Heart left ventricle (tissue), 16 donors: ENCODE measurements at regions of chr14 and their contacts with region 1.

Region 1: GRCh38 chr14:54773171-54773975 is 129.3 kb downstream of the GCH1 start:
- DNase-seq: peak; percentile 84 to 94 (median 88)
- ATAC-seq: peak; percentile 78 to 89 (median 87)
- H3K4me3 ChIP-seq: peak overlapping the region in 4 of 12 donors; percentile 3 to 25 (median 9)
- H3K27ac ChIP-seq: peak overlapping the region; percentile 31 to 96 (median 91)
- H3K4me1 ChIP-seq: peaks cover 0 to 93% (median 62%) of the 10 kb centered on the region in 12 donors
- H3K27me3 ChIP-seq: no peaks in the 10 kb centered on the region
- CTCF ChIP-seq: peak; percentile 47 to 76 (median 64)
- POLR2A ChIP-seq: peak in 1 of 2 donors; percentile 28

Region 2: DNA sequence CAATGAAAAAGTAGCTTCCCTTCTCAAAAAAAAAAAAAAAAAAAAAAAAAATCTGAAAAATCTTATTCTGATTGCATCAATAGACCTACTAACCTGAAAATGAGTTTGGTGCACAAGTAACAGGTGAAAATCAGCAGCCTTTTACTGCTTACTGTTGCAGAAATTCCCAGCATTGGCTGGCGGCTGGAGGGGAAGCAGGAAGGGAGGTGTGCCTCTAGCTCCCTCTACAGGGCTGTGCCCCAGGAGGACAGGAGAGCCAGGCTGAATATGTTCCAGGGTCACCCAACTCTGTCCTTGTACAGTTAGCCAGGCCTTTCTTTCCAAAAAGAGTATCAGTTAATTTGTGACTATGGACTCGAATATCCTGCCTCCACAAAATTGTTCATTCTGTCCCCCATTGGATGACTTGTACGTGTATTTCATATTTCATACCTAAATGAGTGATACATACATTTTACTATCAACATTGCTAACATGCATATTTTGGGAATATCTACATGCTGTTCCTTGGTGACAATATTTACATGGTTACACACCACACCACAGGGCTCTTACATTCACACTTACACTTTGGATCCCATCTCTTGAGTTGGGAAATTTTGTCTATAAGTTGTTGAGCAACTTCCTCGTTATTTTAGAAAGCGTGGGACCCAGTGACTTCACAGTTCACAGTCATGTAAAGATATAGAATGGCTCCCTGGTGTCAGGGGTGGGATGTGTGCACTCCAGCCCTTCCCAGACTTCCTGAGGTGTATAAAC is 81.7 kb before region 1 on chr14:
- intact Hi-C with region 1: loop called in 9 of 10 experiments (anchors 2 to 5 kb)
- DNase-seq: peak; percentile 80 to 86 (median 84)
- ATAC-seq: peak; percentile 67 to 82 (median 74)
- H3K4me3 ChIP-seq: no peak overlapping the region
- H3K27ac ChIP-seq: peak overlapping the region; percentile 44 to 94 (median 70)
- H3K4me1 ChIP-seq: peaks cover 3 to 81% (median 48%) of the 10 kb centered on the region in 12 donors
- H3K27me3 ChIP-seq: no peaks in the 10 kb centered on the region
- CTCF ChIP-seq: peak; percentile 84 to 92 (median 88)
- POLR2A ChIP-seq: no peak

Region 3: GRCh38 chr14:54698966-54699530 is 74.3 kb before region 1 on chr14:
- intact Hi-C with region 1: loop called in 6 of 10 experiments (anchors 5 kb)
- DNase-seq: peak in 4 of 5 donors; percentile 61 to 77 (median 69)
- ATAC-seq: peak; percentile 89 to 95 (median 92)
- H3K4me3 ChIP-seq: no peak overlapping the region
- H3K27ac ChIP-seq: peak overlapping the region; percentile 30 to 92 (median 84)
- H3K4me1 ChIP-seq: peaks cover 0 to 86% (median 40%) of the 10 kb centered on the region in 12 donors
- H3K27me3 ChIP-seq: no peaks in the 10 kb centered on the region
- CTCF ChIP-seq: no peak
- POLR2A ChIP-seq: peak in 1 of 2 donors; percentile 47

Region 4: DNA sequence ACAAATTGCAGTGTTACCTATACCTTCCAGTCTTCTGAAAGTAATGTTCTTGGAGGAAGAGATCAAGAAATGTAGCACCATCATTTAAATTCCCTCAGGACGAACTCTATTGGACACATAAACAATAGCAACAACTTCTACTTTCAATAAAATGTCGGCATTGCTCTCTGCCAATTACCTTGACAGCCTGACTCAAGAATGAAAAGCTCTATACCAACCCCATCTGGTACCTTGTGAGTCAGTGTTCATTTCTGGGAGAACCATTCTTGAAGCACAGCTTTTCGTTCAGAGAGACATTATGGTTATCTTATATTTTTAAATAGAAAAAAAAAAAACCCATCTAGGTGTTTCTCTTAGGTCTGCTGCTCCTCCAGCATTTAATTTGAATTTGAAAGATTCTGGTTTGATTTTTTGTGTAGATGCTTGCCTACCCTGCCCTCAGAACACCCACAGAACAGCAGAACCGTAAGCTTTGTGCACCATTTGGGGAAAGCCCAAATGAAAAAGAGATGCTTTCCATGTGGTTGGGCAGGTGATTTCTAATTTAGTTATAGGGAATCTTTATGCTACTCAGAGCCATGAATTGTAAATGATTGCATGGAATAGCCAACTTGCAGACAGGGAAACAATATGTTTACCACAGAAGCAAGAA is 50.5 kb before region 1 on chr14:
- intact Hi-C with region 1: loop called in 2 of 10 experiments (anchors 5 kb)
- DNase-seq: no peak
- ATAC-seq: peak; percentile 24 to 70 (median 54)
- H3K4me3 ChIP-seq: no peak overlapping the region
- H3K27ac ChIP-seq: peak overlapping the region in 5 of 12 donors; percentile 7 to 54 (median 35)
- H3K4me1 ChIP-seq: peaks cover 0 to 41% (median 18%) of the 10 kb centered on the region in 12 donors
- H3K27me3 ChIP-seq: no peaks in the 10 kb centered on the region
- CTCF ChIP-seq: peak; percentile 27 to 69 (median 45)
- POLR2A ChIP-seq: no peak

Region 5: GRCh38 chr14:54730156-54730961 is 43.0 kb before region 1 on chr14:
- intact Hi-C with region 1: loop called in 4 of 10 experiments (anchors 5 kb)
- DNase-seq: no peak
- ATAC-seq: peak; percentile 40 to 75 (median 66)
- H3K4me3 ChIP-seq: peak overlapping the region in 7 of 12 donors; percentile 4 to 40 (median 23)
- H3K27ac ChIP-seq: peak overlapping the region; percentile 20 to 74 (median 59)
- H3K4me1 ChIP-seq: peaks cover 0 to 59% (median 23%) of the 10 kb centered on the region in 12 donors
- H3K27me3 ChIP-seq: no peaks in the 10 kb centered on the region
- CTCF ChIP-seq: no peak
- POLR2A ChIP-seq: no peak

Region 6: DNA sequence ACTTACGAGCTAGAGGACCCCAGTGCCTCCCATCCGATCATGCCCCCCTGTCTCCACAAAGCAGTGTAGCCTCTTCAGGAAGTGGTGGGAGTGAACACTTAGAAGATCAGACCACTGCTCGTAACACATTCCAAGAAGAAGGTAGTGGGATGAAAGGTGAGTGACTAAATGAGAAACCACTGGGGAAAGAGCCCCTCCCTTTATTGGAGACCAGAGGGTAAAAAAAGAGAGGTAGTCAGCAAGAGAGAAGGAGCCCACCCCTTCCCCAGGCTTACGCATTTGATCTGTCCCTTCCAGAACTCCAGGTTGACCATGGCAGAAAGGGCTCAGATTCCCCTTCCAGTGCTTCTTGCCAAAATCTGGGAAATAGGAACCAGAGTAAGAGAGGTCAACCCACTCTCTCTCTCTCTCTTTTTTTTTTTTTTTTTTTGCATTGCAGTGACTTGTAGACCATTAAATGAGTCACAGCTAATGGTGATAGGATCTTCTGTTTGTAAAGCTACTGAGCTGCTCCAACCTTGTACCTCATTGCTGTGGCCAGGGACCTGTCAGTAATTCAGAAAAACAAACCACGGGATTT is 36.2 kb before region 1 on chr14:
- intact Hi-C with region 1: loop called in 3 of 10 experiments (anchors 5 kb)
- DNase-seq: no peak
- ATAC-seq: no peak
- H3K4me3 ChIP-seq: no peak overlapping the region
- H3K27ac ChIP-seq: peak overlapping the region in 5 of 12 donors; percentile 2 to 55 (median 34)
- H3K4me1 ChIP-seq: peaks cover 0 to 55% (median 15%) of the 10 kb centered on the region in 12 donors
- H3K27me3 ChIP-seq: no peaks in the 10 kb centered on the region
- CTCF ChIP-seq: no peak
- POLR2A ChIP-seq: no peak

Region 7: GRCh38 chr14:54805521-54806322 is 32.3 kb after region 1 on chr14:
- intact Hi-C with region 1: loop called in 1 of 10 experiments (anchors 1 kb)
- DNase-seq: peak; percentile 81 to 91 (median 82)
- ATAC-seq: peak; percentile 82 to 94 (median 90)
- H3K4me3 ChIP-seq: peak overlapping the region in 8 of 12 donors; percentile 1 to 34 (median 16)
- H3K27ac ChIP-seq: no peak overlapping the region
- H3K4me1 ChIP-seq: peaks cover 0 to 11% (median 4%) of the 10 kb centered on the region in 12 donors
- H3K27me3 ChIP-seq: no peaks in the 10 kb centered on the region
- CTCF ChIP-seq: peak; percentile 91 to 98 (median 96)
- POLR2A ChIP-seq: no peak

Region 8: DNA sequence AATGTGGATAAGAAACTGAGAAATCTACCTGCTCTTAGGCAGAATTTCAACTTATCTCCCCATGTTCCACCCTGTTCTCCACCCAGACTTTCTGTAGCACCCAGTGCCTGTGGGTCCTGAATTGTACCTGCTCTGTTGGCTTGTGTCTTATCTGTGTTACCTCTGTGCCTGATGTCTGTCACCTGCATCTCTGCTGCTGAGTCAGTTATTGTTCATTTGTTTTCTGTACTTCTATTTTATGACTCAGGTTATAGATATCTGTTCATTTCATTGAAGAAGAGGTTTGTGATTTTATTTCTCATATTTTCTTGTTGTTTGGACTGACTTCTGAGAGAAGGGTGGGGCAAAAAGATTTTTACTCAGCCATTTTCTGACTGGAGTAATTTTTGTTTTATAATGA is 265.3 kb after region 1 on chr14:
- intact Hi-C with region 1: no loop called
- DNase-seq: no peak
- ATAC-seq: no peak
- H3K4me3 ChIP-seq: no peak overlapping the region
- H3K27ac ChIP-seq: no peak overlapping the region
- H3K4me1 ChIP-seq: no peaks in the 10 kb centered on the region
- H3K27me3 ChIP-seq: no peaks in the 10 kb centered on the region
- CTCF ChIP-seq: no peak
- POLR2A ChIP-seq: no peak